ENCODE measurements at regions of chr4 and their contacts with region 1.

Region 1: GRCh38 chr4:39469429-39470077 is 10.7 kb downstream of the LIAS start:
- DNase-seq: no peak
- ATAC-seq: peak; percentile 69
- H3K4me3 Mint-ChIP-seq: no peak overlapping the region
- H3K27ac Mint-ChIP-seq: peak overlapping the region; percentile 55
- H3K4me1 Mint-ChIP-seq: peaks cover 10% of the 10 kb centered on the region
- H3K27me3 Mint-ChIP-seq: no peaks in the 10 kb centered on the region

Region 2: DNA sequence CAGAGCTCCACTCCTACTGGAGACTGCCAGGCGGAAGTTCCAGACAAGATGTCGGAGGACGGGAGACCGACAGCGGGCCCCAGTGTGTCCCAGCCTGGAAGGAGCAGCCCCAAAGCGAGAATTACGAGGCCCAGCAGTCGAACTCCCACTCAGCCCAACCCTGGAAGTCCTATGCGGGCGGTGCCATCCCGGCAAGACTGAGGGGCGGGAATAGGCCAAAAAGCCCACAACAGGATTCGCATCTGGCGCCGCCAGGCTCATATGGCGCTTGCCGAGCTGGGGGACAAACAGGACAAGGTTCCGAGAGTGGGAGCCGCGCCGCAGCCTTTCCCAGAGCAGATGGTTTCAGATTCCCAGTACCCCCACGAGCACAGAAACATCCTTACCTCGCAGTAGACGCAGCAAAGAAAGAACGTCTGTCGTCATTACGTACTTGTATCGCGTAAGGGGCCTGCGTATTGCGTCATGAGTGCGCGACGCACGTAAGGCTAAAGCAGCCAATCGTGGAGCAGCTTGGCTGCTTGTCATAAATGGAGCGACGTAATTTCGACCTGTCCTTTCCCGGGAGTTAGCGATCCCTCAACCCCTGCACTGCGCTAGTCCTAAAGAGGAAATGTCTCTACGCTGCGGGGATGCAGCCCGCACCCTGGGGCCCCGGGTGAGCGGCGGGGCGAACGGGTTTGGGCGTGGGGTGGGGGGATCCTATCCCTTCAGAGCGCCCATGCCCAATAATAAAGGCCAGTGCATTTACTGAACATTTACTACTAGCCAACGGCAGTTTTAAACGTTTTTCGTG is 10.8 kb before region 1 on chr4 and contains the starts of genes LIAS and RPL9:
- CTCF ChIA-PET with region 1: interaction called, 27 read pairs
- DNase-seq: peak; percentile 96
- ATAC-seq: peak; percentile 91
- H3K4me3 Mint-ChIP-seq: peak within 1 kb of the TSS; percentile 98
- H3K27ac Mint-ChIP-seq: peak within 1 kb of the TSS; percentile 98
- H3K4me1 Mint-ChIP-seq: peaks cover 42% of the 10 kb centered on the region
- H3K27me3 Mint-ChIP-seq: no peaks in the 10 kb centered on the region
- total RNA-seq, gene LIAS: 14.5 to 16.6 TPM
- total RNA-seq, gene RPL9: 713 to 900 TPM

Region 3: DNA sequence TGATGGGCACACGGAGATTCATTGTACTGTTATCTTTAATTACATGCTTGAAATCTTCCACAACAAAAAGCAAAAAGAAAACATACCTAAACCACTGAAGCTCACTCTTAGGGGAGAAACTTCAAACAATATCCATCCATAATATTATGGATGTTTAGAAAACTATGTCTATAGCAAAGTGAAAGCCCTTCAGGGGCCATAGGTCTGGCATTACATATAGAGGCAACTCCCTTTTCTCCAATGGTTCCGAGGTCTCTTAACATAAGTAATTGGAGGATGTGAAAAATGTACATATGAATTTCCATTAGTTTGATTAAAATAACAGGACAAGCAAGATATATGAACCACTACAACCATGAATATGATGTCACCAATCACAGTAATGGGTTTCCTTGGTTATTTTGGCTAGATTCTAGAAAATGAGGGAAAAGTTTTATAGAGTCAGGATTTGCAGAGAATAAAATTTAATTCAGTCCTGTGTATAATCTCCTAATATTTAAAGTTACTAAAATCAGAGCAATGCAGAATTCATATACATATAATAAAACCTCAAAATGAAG is 46.9 kb after region 1 on chr4:
- CTCF ChIA-PET with region 1: no interaction called
- DNase-seq: no peak
- ATAC-seq: no peak
- H3K4me3 Mint-ChIP-seq: no peak overlapping the region
- H3K27ac Mint-ChIP-seq: no peak overlapping the region
- H3K4me1 Mint-ChIP-seq: no peaks in the 10 kb centered on the region
- H3K27me3 Mint-ChIP-seq: no peaks in the 10 kb centered on the region

Region 4: DNA sequence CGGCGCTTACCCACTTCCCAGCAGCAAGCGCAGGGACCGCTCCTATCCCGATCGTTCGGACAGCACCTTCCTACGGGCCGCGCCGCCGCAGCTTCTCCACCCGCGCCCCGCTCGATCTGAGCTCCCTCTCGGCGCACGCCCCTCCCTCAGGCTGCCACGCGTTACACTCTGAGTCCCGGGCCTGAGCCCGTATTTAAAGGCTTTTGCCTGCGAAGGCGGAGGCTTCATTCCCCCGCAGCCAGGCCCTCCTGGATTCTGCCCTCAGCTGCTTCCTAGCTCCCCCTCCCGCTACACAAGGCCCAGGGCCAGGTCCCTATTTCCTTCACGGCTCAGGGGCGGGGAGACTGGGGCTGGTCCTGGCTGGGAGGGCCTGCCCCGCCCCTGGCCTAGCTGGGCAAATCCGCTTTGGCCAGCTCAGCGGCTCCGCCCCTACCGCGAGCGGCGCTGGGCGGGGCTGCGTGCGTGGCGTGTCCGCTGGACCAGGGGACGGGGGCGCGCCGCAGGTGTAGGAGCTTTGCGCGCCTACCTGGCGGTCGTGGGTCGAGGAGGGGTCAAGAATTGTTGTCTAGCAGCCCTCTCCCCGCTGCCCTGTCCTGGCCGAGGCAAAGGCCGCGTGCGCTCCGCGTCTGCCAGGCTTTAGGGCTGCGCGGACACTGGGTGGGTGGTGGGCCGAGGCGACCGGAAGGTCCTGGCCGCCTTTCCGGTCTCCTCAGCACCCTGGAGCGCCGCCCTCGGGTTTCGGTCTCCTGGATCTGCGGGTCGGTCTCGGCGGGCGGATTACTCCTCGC is 57.9 kb after region 1 on chr4 and contains the start of gene UGDH:
- CTCF ChIA-PET with region 1: interaction called, 12 read pairs
- DNase-seq: peak; percentile 94
- ATAC-seq: peak; percentile 99
- H3K4me3 Mint-ChIP-seq: peak within 1 kb of the TSS; percentile 96
- H3K27ac Mint-ChIP-seq: peak within 1 kb of the TSS; percentile 89
- H3K4me1 Mint-ChIP-seq: peaks cover 16% of the 10 kb centered on the region
- H3K27me3 Mint-ChIP-seq: no peaks in the 10 kb centered on the region
- total RNA-seq, gene UGDH: 11.9 to 20.2 TPM

Region 5: GRCh38 chr4:39638354-39639240 is 169.0 kb after region 1 on chr4 and contains the start of gene SMIM14:
- CTCF ChIA-PET with region 1: interaction called, 24 read pairs
- DNase-seq: peak; percentile 92
- ATAC-seq: peak; percentile 87
- H3K4me3 Mint-ChIP-seq: peak within 1 kb of the TSS; percentile 83
- H3K27ac Mint-ChIP-seq: peak within 1 kb of the TSS; percentile 69
- H3K4me1 Mint-ChIP-seq: peaks cover 25% of the 10 kb centered on the region
- H3K27me3 Mint-ChIP-seq: peaks cover 24% of the 10 kb centered on the region
- total RNA-seq, gene SMIM14: 1.8 to 3.3 TPM